Activated naive CD4-positive, alpha-beta T cell treated with anti-CD3 and anti-CD28 coated beads for 36 hours (primary cell): ENCODE measurements at regions of chr19 and their contacts with region 1.

Region 1: GRCh38 chr19:38003438-38004185 is 96.6 kb downstream of the SIPA1L3 start:
- DNase-seq: peak; percentile 75
- H3K4me3 Mint-ChIP-seq: no peak overlapping the region
- H3K27ac Mint-ChIP-seq: no peak overlapping the region
- H3K4me1 Mint-ChIP-seq: peaks cover 14% of the 10 kb centered on the region
- H3K27me3 Mint-ChIP-seq: no peaks in the 10 kb centered on the region

Region 2: GRCh38 chr19:37943480-37943879 is 60.1 kb before region 1 on chr19:
- CTCF ChIA-PET with region 1: no interaction called
- intact Hi-C with region 1: no loop called
- DNase-seq: no peak
- H3K4me3 Mint-ChIP-seq: no peak overlapping the region
- H3K27ac Mint-ChIP-seq: no peak overlapping the region
- H3K4me1 Mint-ChIP-seq: no peaks in the 10 kb centered on the region
- H3K27me3 Mint-ChIP-seq: no peaks in the 10 kb centered on the region

Region 3: GRCh38 chr19:38049105-38049649 is 45.6 kb after region 1 on chr19:
- CTCF ChIA-PET with region 1: no interaction called
- intact Hi-C with region 1: loop called (anchors 1 kb)
- DNase-seq: peak; percentile 67
- H3K4me3 Mint-ChIP-seq: peak overlapping the region; percentile 73
- H3K27ac Mint-ChIP-seq: peak overlapping the region; percentile 96
- H3K4me1 Mint-ChIP-seq: peaks cover 43% of the 10 kb centered on the region
- H3K27me3 Mint-ChIP-seq: no peaks in the 10 kb centered on the region

Region 4: DNA sequence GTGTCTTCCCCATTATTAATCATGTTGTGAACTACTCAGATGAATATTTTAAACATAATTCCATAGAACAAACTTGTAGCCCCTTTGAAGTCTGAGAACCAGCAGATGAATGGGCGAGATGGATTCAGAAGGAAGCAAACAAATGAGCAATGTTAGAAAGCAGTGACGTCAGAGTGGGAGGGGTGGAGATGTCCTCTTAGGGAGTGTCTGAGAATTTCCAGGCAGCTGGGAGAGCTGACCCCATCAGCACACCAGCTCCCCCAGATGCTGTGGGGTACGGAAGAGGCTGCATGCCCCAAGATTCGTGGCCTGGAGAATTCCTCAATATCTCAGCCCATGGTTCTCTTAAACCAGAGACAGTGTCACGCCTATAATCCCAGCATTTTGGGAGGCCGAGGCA is 151.8 kb after region 1 on chr19:
- CTCF ChIA-PET with region 1: no interaction called
- intact Hi-C with region 1: no loop called
- DNase-seq: no peak
- H3K4me3 Mint-ChIP-seq: no peak overlapping the region
- H3K27ac Mint-ChIP-seq: no peak overlapping the region
- H3K4me1 Mint-ChIP-seq: no peaks in the 10 kb centered on the region
- H3K27me3 Mint-ChIP-seq: no peaks in the 10 kb centered on the region